CD4-positive, alpha-beta T cell (primary cell): ENCODE measurements at regions of chr11 and their contacts with region 1.

Region 1: GRCh38 chr11:47248664-47249377 is at the start of gene ACP2:
- DNase-seq: peak; percentile 78 to 93 (median 82)
- ATAC-seq: peak; percentile 97
- H3K4me3 ChIP-seq: peak within 1 kb of the TSS; percentile 77
- H3K4me3 Mint-ChIP-seq: peak within 1 kb of the TSS; percentile 94
- H3K27ac ChIP-seq: peak within 1 kb of the TSS; percentile 75 to 82
- H3K27ac Mint-ChIP-seq: peak within 1 kb of the TSS; percentile 93
- H3K4me1 ChIP-seq: peaks cover 28% of the 10 kb centered on the region
- H3K4me1 Mint-ChIP-seq: peaks cover 29% of the 10 kb centered on the region
- H3K27me3 ChIP-seq: no peaks in the 10 kb centered on the region
- H3K27me3 Mint-ChIP-seq: no peaks in the 10 kb centered on the region
- CTCF ChIP-seq: no peak
- total RNA-seq, gene ACP2: 16.8 to 17.2 TPM

Region 2: GRCh38 chr11:47186937-47187695 is 61.7 kb before region 1 on chr11:
- CTCF ChIA-PET with region 1: no interaction called
- POLR2A ChIA-PET with region 1: no interaction called
- intact Hi-C with region 1: no loop called
- DNase-seq: peak in 11 of 14 experiments; percentile 23 to 72 (median 35)
- ATAC-seq: peak; percentile 75
- H3K4me3 ChIP-seq: peak overlapping the region; percentile 47
- H3K4me3 Mint-ChIP-seq: peak overlapping the region; percentile 85
- H3K27ac ChIP-seq: no peak overlapping the region
- H3K27ac Mint-ChIP-seq: no peak overlapping the region
- H3K4me1 ChIP-seq: peaks cover 24% of the 10 kb centered on the region
- H3K4me1 Mint-ChIP-seq: peaks cover 6% of the 10 kb centered on the region
- H3K27me3 ChIP-seq: peaks cover 39 to 43% of the 10 kb centered on the region in 2 experiments
- H3K27me3 Mint-ChIP-seq: peaks cover 35% of the 10 kb centered on the region
- CTCF ChIP-seq: no peak

Region 3: GRCh38 chr11:47233989-47234668 is 14.7 kb before region 1 on chr11:
- CTCF ChIA-PET with region 1: interaction called, 14 read pairs
- POLR2A ChIA-PET with region 1: interaction called, 25 read pairs
- intact Hi-C with region 1: no loop called
- DNase-seq: peak in 8 of 14 experiments; percentile 9 to 69 (median 22)
- ATAC-seq: no peak
- H3K4me3 ChIP-seq: peak overlapping the region; percentile 10
- H3K4me3 Mint-ChIP-seq: peak overlapping the region; percentile 80
- H3K27ac ChIP-seq: peak overlapping the region; percentile 65 to 72
- H3K27ac Mint-ChIP-seq: peak overlapping the region; percentile 94
- H3K4me1 ChIP-seq: peaks cover 24% of the 10 kb centered on the region
- H3K4me1 Mint-ChIP-seq: peaks cover 29% of the 10 kb centered on the region
- H3K27me3 ChIP-seq: no peaks in the 10 kb centered on the region
- H3K27me3 Mint-ChIP-seq: no peaks in the 10 kb centered on the region
- CTCF ChIP-seq: peak; percentile 11

Region 4: DNA sequence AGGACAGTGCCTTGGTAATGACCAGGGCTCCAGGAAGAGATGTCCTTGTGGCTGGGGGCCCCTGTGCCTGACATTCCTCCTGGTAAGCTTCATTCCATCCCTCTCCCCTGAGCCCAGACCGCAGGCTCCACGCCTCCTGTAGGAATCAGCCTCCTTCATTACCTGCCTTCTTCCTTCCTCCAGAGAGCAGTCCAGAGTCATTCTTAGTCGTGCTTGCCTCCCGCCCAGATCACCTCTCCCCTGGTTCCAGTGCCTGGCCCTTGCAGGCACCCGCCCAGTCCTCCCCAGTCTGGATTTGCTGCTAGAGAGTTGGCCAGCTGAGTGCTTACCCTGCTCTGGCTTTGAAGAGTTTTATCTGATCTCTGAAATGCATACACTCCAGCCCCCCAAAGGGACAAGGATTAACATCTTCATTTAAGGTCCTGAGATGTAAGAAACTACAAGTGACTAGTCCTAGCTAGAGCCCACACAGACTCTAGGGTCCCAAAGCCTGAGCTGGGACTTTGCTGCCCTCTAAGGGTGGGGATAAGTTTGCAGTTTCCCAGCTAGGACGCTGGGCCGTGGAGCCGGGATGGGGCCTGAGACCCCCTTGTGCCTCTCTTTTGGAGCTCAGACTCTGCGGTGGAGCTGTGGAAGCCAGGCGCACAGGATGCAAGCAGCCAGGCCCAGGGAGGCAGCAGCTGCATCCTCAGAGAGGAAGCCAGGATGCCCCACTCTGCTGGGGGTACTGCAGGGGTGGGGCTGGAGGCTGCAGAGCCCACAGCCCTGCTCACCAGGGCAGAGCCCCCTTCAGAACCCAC is 10.6 kb after region 1 on chr11:
- CTCF ChIA-PET with region 1: interaction called, 6 read pairs
- POLR2A ChIA-PET with region 1: interaction called, 10 read pairs
- intact Hi-C with region 1: no loop called
- DNase-seq: peak in 8 of 14 experiments; percentile 9 to 61 (median 30)
- ATAC-seq: peak; percentile 82
- H3K4me3 ChIP-seq: no peak overlapping the region
- H3K4me3 Mint-ChIP-seq: no peak overlapping the region
- H3K27ac ChIP-seq: no peak overlapping the region
- H3K27ac Mint-ChIP-seq: no peak overlapping the region
- H3K4me1 ChIP-seq: peaks cover 17% of the 10 kb centered on the region
- H3K4me1 Mint-ChIP-seq: peaks cover 14% of the 10 kb centered on the region
- H3K27me3 ChIP-seq: no peaks in the 10 kb centered on the region
- H3K27me3 Mint-ChIP-seq: no peaks in the 10 kb centered on the region
- CTCF ChIP-seq: peak; percentile 47

Region 5: GRCh38 chr11:47454180-47454644 is 205.4 kb after region 1 on chr11:
- CTCF ChIA-PET with region 1: no interaction called
- POLR2A ChIA-PET with region 1: no interaction called
- intact Hi-C with region 1: no loop called
- DNase-seq: peak; percentile 30 to 87 (median 55)
- ATAC-seq: peak; percentile 99
- H3K4me3 ChIP-seq: no peak overlapping the region
- H3K4me3 Mint-ChIP-seq: no peak overlapping the region
- H3K27ac ChIP-seq: no peak overlapping the region
- H3K27ac Mint-ChIP-seq: no peak overlapping the region
- H3K4me1 ChIP-seq: peaks cover 4% of the 10 kb centered on the region
- H3K4me1 Mint-ChIP-seq: peaks cover 5% of the 10 kb centered on the region
- H3K27me3 ChIP-seq: no peaks in the 10 kb centered on the region
- H3K27me3 Mint-ChIP-seq: no peaks in the 10 kb centered on the region
- CTCF ChIP-seq: peak; percentile 64

Region 6: DNA sequence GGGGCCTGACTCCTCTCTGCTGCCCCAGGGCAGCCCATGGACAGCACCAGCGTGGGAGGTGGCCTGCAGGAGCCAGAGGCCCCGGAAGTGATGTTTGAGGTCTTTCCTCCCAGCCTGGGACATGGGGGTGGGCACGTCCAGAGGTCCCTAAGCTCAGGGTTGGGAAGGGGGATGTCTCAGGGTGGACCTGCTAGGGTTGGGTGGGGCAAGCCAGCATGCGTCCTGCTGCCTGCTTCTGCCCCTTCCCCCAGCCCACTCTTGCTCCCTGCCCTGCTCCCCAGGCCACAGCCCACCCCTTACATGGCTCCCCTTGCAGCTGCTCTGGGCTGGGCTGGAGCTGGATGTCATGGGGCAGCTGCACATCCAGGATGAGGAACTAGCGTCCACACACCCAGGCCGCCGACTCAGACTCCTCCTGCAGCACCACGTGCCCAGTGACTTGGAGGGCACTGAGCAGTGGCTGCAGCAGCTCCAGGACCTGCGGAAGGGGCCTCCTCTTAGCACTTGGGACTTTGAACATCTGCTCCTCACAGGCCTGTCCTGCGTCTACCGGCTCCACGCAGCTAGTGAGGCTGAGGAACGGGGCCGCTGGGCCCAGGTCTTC is 339.0 kb after region 1 on chr11:
- CTCF ChIA-PET with region 1: no interaction called
- POLR2A ChIA-PET with region 1: no interaction called
- intact Hi-C with region 1: loop called in 1 of 2 experiments (anchors 10 kb)
- DNase-seq: peak in 3 of 14 experiments; percentile 7 to 49 (median 40)
- ATAC-seq: no peak
- H3K4me3 ChIP-seq: no peak overlapping the region
- H3K4me3 Mint-ChIP-seq: no peak overlapping the region
- H3K27ac ChIP-seq: no peak overlapping the region
- H3K27ac Mint-ChIP-seq: no peak overlapping the region
- H3K4me1 ChIP-seq: no peaks in the 10 kb centered on the region
- H3K4me1 Mint-ChIP-seq: no peaks in the 10 kb centered on the region
- H3K27me3 ChIP-seq: peaks cover 4 to 9% of the 10 kb centered on the region in 2 experiments
- H3K27me3 Mint-ChIP-seq: peaks cover 6% of the 10 kb centered on the region
- CTCF ChIP-seq: no peak